ENCODE measurements at regions of chr12 and their contacts with region 1.

Region 1: DNA sequence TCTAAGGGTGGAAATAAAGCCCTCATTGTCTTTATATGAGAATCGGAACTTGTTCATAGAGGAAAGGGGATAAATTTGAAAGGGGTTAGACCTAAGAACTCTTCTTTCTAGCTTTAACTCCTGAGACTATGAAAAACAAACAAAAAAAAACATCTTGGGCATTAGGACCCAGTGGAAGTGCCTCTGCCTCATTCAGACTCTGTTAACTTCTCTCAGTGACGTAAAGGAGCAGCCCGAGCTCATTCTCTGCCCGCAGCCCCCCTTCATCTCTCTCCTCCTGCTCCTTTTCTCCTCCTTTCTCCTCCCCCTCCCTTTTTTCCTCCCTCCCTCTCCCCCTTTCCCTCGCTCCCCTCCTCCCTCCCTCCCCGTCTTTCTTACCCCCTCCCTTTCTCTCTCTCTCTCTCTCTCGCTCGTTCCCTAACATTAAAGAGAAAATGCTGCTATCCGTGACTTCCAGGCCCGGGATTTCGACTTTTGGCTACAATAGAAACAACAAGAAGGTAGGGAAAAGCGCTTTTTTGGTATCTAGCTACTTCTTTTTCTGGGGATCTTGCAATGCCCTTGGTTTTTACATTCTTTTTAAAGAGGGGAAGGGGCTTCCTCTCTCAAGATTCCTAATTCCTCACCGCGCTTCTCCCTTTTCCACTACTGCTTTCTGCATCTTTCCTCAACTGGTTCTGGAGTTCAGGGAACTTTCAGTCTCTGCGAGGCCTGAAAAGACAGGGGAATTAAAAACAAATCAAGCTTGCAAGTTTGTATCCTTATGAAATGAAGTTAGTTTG is at the start of gene RBMS2:
- DNase-seq: peak; percentile 55 to 76
- ATAC-seq: peak; percentile 89 to 94
- H3K4me3 ChIP-seq: peak within 1 kb of the TSS; percentile 51 to 65 (median 62)
- H3K27ac ChIP-seq: peak within 1 kb of the TSS; percentile 78 to 86 (median 85)
- H3K4me1 ChIP-seq: peaks cover 0 to 14% of the 10 kb centered on the region in 2 donors
- H3K27me3 ChIP-seq: no peaks in the 10 kb centered on the region
- CTCF ChIP-seq: no peak
- POLR2A ChIP-seq: peak; percentile 32 to 33
- total RNA-seq, gene RBMS2: 4.1 to 11.0 (median 5.4) TPM

Region 2: DNA sequence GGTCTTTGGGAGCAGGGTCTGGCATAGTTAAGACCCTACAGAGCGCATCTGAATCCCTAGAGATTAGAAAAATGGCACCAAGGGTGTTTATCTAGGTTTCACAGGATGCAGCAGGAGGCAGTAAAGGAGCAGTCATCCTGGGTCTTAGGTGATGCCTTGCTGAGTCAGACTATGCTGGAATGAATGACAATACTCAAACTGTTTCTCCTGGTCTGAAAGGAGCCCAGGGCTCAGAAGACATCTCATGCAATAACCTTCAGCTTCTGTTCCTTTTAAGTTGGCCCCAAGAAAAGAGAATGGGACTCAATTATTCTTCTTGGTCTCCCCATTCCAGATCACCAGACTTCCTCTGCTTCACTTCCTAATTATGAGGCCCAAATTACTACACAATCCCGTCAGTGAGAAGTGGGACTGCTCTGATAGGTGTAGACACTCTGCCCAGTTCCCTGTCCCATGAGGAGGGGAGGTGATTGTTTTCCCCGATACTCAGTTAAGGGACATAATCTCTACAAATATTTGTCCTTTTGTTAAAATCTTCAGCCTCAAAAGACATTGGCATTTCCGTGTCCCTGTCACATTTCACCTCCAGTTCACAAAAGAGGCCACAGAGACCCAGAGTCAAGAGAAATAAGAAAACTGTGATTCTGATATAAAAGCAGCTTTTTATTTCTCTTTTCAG is 144.3 kb before region 1 on chr12:
- in situ Hi-C with region 1: no loop called
- intact Hi-C with region 1: no loop called
- DNase-seq: no peak
- ATAC-seq: no peak
- H3K4me3 ChIP-seq: no peak overlapping the region
- H3K27ac ChIP-seq: no peak overlapping the region
- H3K4me1 ChIP-seq: no peaks in the 10 kb centered on the region
- H3K27me3 ChIP-seq: no peaks in the 10 kb centered on the region
- CTCF ChIP-seq: no peak
- POLR2A ChIP-seq: no peak

Region 3: GRCh38 chr12:56389412-56389811 is 132.4 kb before region 1 on chr12:
- in situ Hi-C with region 1: no loop called
- intact Hi-C with region 1: no loop called
- DNase-seq: no peak
- ATAC-seq: no peak
- H3K4me3 ChIP-seq: no peak overlapping the region
- H3K27ac ChIP-seq: no peak overlapping the region
- H3K4me1 ChIP-seq: no peaks in the 10 kb centered on the region
- H3K27me3 ChIP-seq: no peaks in the 10 kb centered on the region
- CTCF ChIP-seq: no peak
- POLR2A ChIP-seq: no peak

Region 4: DNA sequence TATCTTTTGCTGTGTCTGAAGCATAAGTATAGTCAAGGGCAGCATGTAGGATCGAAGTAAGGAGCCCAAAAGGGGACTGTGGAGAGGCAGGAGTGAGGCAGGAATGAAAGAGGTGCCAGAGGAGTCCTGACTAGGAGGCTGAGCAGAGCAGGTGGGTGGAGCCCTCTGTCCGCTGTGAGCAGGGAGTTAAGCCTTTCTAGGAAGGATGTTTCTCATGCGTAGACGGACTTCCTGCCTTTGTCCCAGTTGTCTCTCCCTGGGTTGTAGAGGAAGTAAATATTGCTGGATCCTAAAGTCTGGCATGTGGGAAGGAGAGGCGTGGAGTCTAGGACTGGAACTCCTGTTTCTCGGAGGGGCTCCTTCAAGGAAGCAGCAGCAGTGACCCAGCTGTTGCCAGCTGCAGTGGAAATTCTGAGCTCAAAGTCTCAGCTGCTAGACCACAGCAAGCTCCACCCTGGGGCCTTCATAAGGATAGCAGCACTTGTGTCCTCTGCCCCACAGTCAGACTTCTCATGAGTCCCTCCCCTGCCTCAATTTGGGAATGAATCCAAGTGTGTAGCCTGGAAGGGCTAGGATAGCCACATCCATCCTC is 43.8 kb after region 1 on chr12:
- in situ Hi-C with region 1: loop called (anchors 5 to 10 kb)
- intact Hi-C with region 1: loop called (anchors 2 kb)
- DNase-seq: peak; percentile 29 to 43
- ATAC-seq: peak; percentile 84 to 89
- H3K4me3 ChIP-seq: no peak overlapping the region
- H3K27ac ChIP-seq: peak overlapping the region; percentile 66 to 73 (median 72)
- H3K4me1 ChIP-seq: peaks cover 6 to 24% of the 10 kb centered on the region in 2 donors
- H3K27me3 ChIP-seq: no peaks in the 10 kb centered on the region
- CTCF ChIP-seq: peak in 2 of 5 experiments; percentile 8 to 15
- POLR2A ChIP-seq: peak in 1 of 2 donors; percentile 43

Region 5: DNA sequence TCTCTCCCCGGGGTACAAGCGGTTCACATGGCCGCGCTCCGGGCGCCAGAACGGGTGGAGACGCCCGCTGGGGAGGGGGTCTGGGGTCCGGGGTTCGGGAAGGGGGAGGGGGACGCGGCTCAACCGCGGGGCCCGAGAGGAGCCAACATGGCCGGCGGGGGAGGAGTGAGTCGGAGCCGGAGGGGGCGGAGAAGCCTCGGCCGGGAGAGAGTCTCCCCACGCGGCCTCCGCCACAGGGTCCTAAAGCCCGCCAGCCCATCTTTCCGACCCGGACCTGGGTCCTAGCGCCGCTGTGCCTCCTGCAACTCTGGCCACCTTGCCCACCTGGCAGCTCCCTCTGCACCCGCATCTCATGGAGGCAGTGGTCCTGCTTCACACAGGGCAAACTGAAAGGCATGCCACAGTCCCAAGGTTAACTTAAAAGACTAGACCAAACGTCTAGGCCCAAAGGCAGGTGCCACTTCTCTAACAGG is 108.4 kb after region 1 on chr12 and contains the start of gene BAZ2A:
- in situ Hi-C with region 1: no loop called
- intact Hi-C with region 1: loop called (anchors 2 kb)
- DNase-seq: peak; percentile 85 to 86
- ATAC-seq: peak; percentile 64
- H3K4me3 ChIP-seq: peak within 1 kb of the TSS; percentile 95 to 100 (median 99)
- H3K27ac ChIP-seq: peak within 1 kb of the TSS; percentile 96 to 100 (median 98)
- H3K4me1 ChIP-seq: peaks cover 71% of the 10 kb centered on the region in 2 donors
- H3K27me3 ChIP-seq: no peaks in the 10 kb centered on the region
- CTCF ChIP-seq: no peak
- POLR2A ChIP-seq: peak; percentile 31 to 45
- total RNA-seq, gene BAZ2A: 40.5 to 65.8 (median 55.4) TPM